ENCODE measurements at regions of chr20 and their contacts with region 1.

Region 1: GRCh38 chr20:33348131-33348855 is 53.0 kb downstream of the CDK5RAP1 start:
- DNase-seq: no peak
- ATAC-seq: no peak
- H3K4me3 Mint-ChIP-seq: no peak overlapping the region
- H3K27ac Mint-ChIP-seq: no peak overlapping the region
- H3K4me1 Mint-ChIP-seq: no peaks in the 10 kb centered on the region
- H3K27me3 Mint-ChIP-seq: no peaks in the 10 kb centered on the region

Region 2: DNA sequence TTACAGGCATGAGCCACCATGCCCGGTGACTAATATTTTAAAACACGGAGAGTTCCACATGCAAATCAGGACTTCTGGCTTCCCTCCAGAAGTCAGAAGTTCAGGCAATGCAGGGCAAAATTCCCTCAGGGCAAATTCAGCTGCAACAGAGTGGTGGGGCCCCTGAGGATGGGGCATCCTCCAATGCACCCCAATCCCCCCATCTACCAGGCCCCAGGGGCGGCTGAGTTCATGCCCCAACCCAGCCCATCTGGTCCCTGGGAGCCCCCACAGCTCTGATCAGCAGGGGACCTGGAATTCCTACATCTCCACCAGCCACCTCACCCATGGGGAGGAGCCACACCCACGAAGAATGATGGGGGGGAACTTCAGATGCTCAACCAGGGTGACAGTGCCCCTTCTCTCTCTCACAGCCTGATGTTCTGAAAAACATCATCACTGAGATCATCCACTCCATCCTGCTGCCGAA is 42.7 kb before region 1 on chr20:
- CTCF ChIA-PET with region 1: no interaction called
- POLR2A ChIA-PET with region 1: no interaction called
- intact Hi-C with region 1: loop called in 1 of 2 experiments (anchors 5 kb)
- DNase-seq: no peak
- ATAC-seq: no peak
- H3K4me3 Mint-ChIP-seq: no peak overlapping the region
- H3K27ac Mint-ChIP-seq: no peak overlapping the region
- H3K4me1 Mint-ChIP-seq: no peaks in the 10 kb centered on the region
- H3K27me3 Mint-ChIP-seq: no peaks in the 10 kb centered on the region

Measured in activated CD4-positive, alpha-beta T cell treated with anti-CD3 and anti-CD28 coated beads for 36 hours (primary cell).